Natural killer cell (primary cell): ENCODE measurements at regions of chr15 and their contacts with region 1.

Region 1: GRCh38 chr15:71448688-71449114 is 333.4 kb downstream of the THSD4 start:
- DNase-seq: peak in 1 of 2 donors; percentile 19
- ATAC-seq: no peak
- H3K4me3 ChIP-seq: no peak overlapping the region
- H3K4me3 Mint-ChIP-seq: no peak overlapping the region
- H3K27ac ChIP-seq: no peak overlapping the region
- H3K27ac Mint-ChIP-seq: no peak overlapping the region
- H3K4me1 ChIP-seq: no peaks in the 10 kb centered on the region
- H3K4me1 Mint-ChIP-seq: no peaks in the 10 kb centered on the region
- H3K27me3 ChIP-seq: no peaks in the 10 kb centered on the region
- H3K27me3 Mint-ChIP-seq: peaks cover 0 to 5% of the 10 kb centered on the region in 2 donors
- CTCF ChIP-seq: peak; percentile 61

Region 2: DNA sequence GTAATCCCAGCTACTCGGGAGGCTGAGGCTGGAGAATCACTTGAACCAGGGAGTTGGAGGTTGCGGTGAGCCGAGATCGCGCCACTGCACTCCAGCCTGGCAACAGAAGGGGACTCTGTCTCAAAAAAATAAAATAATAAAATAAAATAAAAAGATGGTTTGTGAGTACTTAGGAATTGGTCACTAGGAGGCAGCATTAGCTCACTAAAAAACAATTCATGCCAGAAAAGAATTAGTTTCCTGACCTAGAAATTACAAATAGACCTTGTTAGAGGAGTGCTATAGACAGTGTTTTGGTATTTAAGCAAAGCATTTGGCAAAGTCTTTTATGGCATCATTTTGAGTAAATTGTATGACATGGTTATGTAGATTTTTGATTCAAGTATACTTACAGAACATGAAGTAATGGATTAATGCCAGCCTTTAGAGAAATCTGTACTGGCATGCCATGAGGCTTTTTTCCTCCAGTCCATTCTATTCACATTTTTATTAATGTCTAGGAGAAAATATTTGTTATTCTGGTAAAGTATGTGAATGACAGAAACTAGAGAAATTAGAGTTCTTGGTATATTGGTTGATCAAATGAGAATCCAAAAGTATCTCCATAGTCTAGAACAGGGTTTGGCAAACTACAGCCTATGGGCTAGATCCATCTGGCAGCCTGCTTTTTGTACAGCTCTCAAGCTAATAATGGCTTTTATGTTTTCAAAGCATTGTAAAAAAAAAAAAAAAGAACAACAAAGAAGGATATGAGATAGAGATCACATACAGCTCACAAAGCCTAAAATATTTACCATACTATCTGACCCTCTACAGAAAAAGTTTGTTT is 474.5 kb before region 1 on chr15:
- intact Hi-C with region 1: loop called (anchors 10 kb)
- DNase-seq: peak in 1 of 2 donors; percentile 7
- ATAC-seq: no peak
- H3K4me3 ChIP-seq: no peak overlapping the region
- H3K4me3 Mint-ChIP-seq: no peak overlapping the region
- H3K27ac ChIP-seq: no peak overlapping the region
- H3K27ac Mint-ChIP-seq: no peak overlapping the region
- H3K4me1 ChIP-seq: no peaks in the 10 kb centered on the region
- H3K4me1 Mint-ChIP-seq: no peaks in the 10 kb centered on the region
- H3K27me3 ChIP-seq: peaks cover 2% of the 10 kb centered on the region
- H3K27me3 Mint-ChIP-seq: peaks cover 0 to 18% of the 10 kb centered on the region in 2 donors
- CTCF ChIP-seq: no peak

Region 3: GRCh38 chr15:71069682-71070081 is 379.0 kb before region 1 on chr15:
- intact Hi-C with region 1: no loop called
- DNase-seq: no peak
- ATAC-seq: no peak
- H3K4me3 ChIP-seq: no peak overlapping the region
- H3K4me3 Mint-ChIP-seq: no peak overlapping the region
- H3K27ac ChIP-seq: no peak overlapping the region
- H3K27ac Mint-ChIP-seq: no peak overlapping the region
- H3K4me1 ChIP-seq: no peaks in the 10 kb centered on the region
- H3K4me1 Mint-ChIP-seq: no peaks in the 10 kb centered on the region
- H3K27me3 ChIP-seq: peaks cover 3% of the 10 kb centered on the region
- H3K27me3 Mint-ChIP-seq: peaks cover 12 to 31% of the 10 kb centered on the region in 2 donors
- CTCF ChIP-seq: no peak

Region 4: GRCh38 chr15:71248386-71248785 is 200.3 kb before region 1 on chr15:
- intact Hi-C with region 1: no loop called
- DNase-seq: no peak
- ATAC-seq: no peak
- H3K4me3 ChIP-seq: no peak overlapping the region
- H3K4me3 Mint-ChIP-seq: no peak overlapping the region
- H3K27ac ChIP-seq: no peak overlapping the region
- H3K27ac Mint-ChIP-seq: no peak overlapping the region
- H3K4me1 ChIP-seq: no peaks in the 10 kb centered on the region
- H3K4me1 Mint-ChIP-seq: no peaks in the 10 kb centered on the region
- H3K27me3 ChIP-seq: no peaks in the 10 kb centered on the region
- H3K27me3 Mint-ChIP-seq: peaks cover 3 to 23% of the 10 kb centered on the region in 2 donors
- CTCF ChIP-seq: no peak